PC-3 (cell line): ENCODE measurements at regions of chrX and their contacts with region 1.

Region 1: GRCh38 chrX:104098151-104098808 is 14.0 kb upstream of the ZCCHC18 start:
- DNase-seq: peak; percentile 66
- ATAC-seq: peak; percentile 73
- H3K4me3 ChIP-seq: no peak overlapping the region
- H3K27ac ChIP-seq: no peak overlapping the region
- H3K4me1 ChIP-seq: no peaks in the 10 kb centered on the region
- H3K27me3 ChIP-seq: peaks cover 32% of the 10 kb centered on the region
- CTCF ChIP-seq: peak; percentile 68

Region 2: GRCh38 chrX:104113222-104113965 is 15.1 kb after region 1 on chrX:
- CTCF ChIA-PET with region 1: interaction called, 3 read pairs
- POLR2A ChIA-PET with region 1: no interaction called
- intact Hi-C with region 1: loop called (anchors 1 kb)
- DNase-seq: peak; percentile 72
- ATAC-seq: peak; percentile 89
- H3K4me3 ChIP-seq: peak overlapping the region; percentile 75
- H3K27ac ChIP-seq: no peak overlapping the region
- H3K4me1 ChIP-seq: no peaks in the 10 kb centered on the region; the same call in 1 of the 2 replicates
- H3K27me3 ChIP-seq: peaks cover 7% of the 10 kb centered on the region
- CTCF ChIP-seq: peak; percentile 64

Region 3: DNA sequence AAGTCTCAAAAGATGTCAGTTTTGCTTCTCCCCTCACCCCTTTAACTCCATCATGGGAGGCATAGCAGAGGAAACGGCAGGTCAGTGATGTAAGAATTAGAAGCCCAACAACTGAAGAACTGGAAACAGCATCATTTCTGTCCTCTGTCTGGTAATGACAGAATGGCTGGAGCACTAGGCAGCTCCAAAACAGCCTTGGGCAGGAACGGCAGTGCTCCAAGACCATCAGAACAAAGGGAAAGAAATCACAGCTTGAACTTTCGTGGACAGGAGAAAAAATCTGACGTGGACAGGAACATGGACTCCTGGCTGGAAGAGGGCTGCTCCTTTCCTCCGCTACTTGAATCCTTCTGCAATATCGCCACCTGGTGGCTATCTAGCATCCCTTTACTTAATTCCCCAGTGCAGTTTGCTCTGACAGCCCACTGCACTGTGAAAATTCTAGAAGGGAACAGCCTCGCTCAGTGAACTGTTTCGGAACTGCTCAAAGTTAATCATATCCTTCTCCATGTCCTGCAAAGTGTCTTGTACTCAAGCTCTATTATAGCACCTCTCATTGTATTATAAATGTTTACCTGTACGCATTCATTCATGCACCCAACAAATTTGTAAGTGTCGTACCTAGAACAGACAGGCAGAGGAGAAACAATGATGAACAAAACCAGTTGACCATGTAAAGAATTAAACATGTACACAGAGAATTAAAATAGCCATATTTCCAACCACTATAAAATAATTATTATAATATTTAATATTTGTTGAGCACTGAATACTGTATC is 38.1 kb after region 1 on chrX:
- CTCF ChIA-PET with region 1: no interaction called
- POLR2A ChIA-PET with region 1: no interaction called
- intact Hi-C with region 1: loop called (anchors 1 kb)
- DNase-seq: peak; percentile 79
- ATAC-seq: peak; percentile 99
- H3K4me3 ChIP-seq: peak overlapping the region; percentile 63
- H3K27ac ChIP-seq: no peak overlapping the region
- H3K4me1 ChIP-seq: no peaks in the 10 kb centered on the region
- H3K27me3 ChIP-seq: no peaks in the 10 kb centered on the region
- CTCF ChIP-seq: peak; percentile 76

Region 4: GRCh38 chrX:104156630-104157529 is 58.6 kb after region 1 on chrX and contains the start of gene SLC25A53:
- CTCF ChIA-PET with region 1: no interaction called
- POLR2A ChIA-PET with region 1: no interaction called
- intact Hi-C with region 1: no loop called
- DNase-seq: peak; percentile 76
- ATAC-seq: peak; percentile 92
- H3K4me3 ChIP-seq: peak within 1 kb of the TSS; percentile 98
- H3K27ac ChIP-seq: peak within 1 kb of the TSS; percentile 87
- H3K4me1 ChIP-seq: no peaks in the 10 kb centered on the region; the same call in 1 of the 2 replicates
- H3K27me3 ChIP-seq: no peaks in the 10 kb centered on the region
- CTCF ChIP-seq: no peak
- total RNA-seq, gene SLC25A53: 6.6 and 12.4 TPM in 2 replicates